ENCODE measurements at regions of chr14 and their contacts with region 1.

Region 1: DNA sequence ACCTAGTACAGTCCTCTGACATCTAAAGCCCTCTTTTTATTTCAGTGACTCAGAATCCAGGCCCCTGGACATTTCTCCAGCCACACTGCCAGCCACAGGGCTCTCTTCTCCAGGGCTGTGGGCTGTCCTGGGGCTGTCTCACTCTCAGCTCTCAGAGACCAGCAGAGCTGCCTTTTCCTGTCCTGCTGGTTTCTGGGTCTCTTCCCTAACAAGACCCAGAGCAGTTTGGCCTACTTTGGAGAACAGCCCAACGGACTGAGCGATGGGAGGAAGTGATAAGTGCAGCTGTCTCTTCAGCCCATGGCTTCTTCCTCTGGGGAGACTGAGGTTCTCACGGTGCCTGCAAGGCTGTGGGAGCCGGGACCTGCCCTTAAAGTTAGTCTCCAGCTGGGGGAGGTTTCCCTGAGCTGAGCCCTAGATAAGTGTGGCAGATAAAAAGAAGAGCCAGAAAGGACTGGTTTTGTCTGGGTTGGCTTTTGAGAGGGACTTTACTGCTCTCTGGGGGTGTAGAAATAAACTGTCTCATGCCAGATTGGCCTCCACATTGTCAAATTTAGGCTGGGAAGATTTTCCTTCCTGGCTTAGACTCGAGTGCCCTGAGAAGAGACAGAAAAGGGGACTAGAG is 979.9 kb downstream of the VRK1 start:
- DNase-seq: peak in 4 of 14 experiments; percentile 17 to 32 (median 28)
- ATAC-seq: peak; percentile 71
- H3K4me3 ChIP-seq: no peak overlapping the region
- H3K4me3 Mint-ChIP-seq: peak overlapping the region; percentile 43
- H3K27ac ChIP-seq: no peak overlapping the region
- H3K27ac Mint-ChIP-seq: peak overlapping the region; percentile 31
- H3K4me1 ChIP-seq: peaks cover 13% of the 10 kb centered on the region
- H3K4me1 Mint-ChIP-seq: peaks cover 37% of the 10 kb centered on the region
- H3K27me3 ChIP-seq: no peaks in the 10 kb centered on the region
- H3K27me3 Mint-ChIP-seq: no peaks in the 10 kb centered on the region
- CTCF ChIP-seq: no peak

Region 2: DNA sequence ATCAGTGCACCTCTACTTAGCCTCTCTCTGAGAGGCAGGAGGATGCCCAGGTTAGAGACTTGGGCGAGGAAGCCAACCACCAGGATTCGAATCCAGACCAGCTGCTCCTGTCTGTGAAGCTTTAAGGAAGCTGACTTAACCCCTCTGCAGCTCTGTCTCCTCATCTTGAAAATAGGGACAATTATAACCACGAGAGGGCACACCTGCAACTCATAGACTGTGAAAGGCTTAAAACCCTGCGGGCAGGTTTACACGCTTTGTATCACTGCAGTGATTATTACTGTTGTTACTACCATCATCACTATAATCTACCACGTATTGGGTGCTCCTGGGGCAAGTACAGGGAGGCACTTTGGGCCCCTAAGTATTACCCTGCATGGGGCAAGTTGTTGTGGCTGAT is 600.0 kb before region 1 on chr14:
- CTCF ChIA-PET with region 1: no interaction called
- POLR2A ChIA-PET with region 1: no interaction called
- intact Hi-C with region 1: loop called (anchors 1 to 5 kb)
- DNase-seq: peak in 13 of 14 experiments; percentile 4 to 71 (median 23)
- ATAC-seq: peak; percentile 71
- H3K4me3 ChIP-seq: no peak overlapping the region
- H3K4me3 Mint-ChIP-seq: no peak overlapping the region
- H3K27ac ChIP-seq: no peak overlapping the region
- H3K27ac Mint-ChIP-seq: peak overlapping the region; percentile 16
- H3K4me1 ChIP-seq: peaks cover 21% of the 10 kb centered on the region
- H3K4me1 Mint-ChIP-seq: peaks cover 35% of the 10 kb centered on the region
- H3K27me3 ChIP-seq: no peaks in the 10 kb centered on the region
- H3K27me3 Mint-ChIP-seq: no peaks in the 10 kb centered on the region
- CTCF ChIP-seq: peak; percentile 41

Region 3: GRCh38 chr14:97185186-97185585 is 591.9 kb before region 1 on chr14:
- CTCF ChIA-PET with region 1: no interaction called
- POLR2A ChIA-PET with region 1: no interaction called
- intact Hi-C with region 1: loop called (anchors 1 to 5 kb)
- DNase-seq: peak in 9 of 14 experiments; percentile 8 to 60 (median 24)
- ATAC-seq: no peak
- H3K4me3 ChIP-seq: no peak overlapping the region
- H3K4me3 Mint-ChIP-seq: no peak overlapping the region
- H3K27ac ChIP-seq: no peak overlapping the region
- H3K27ac Mint-ChIP-seq: no peak overlapping the region
- H3K4me1 ChIP-seq: peaks cover 5% of the 10 kb centered on the region
- H3K4me1 Mint-ChIP-seq: peaks cover 7% of the 10 kb centered on the region
- H3K27me3 ChIP-seq: no peaks in the 10 kb centered on the region
- H3K27me3 Mint-ChIP-seq: no peaks in the 10 kb centered on the region
- CTCF ChIP-seq: peak; percentile 54

Region 4: DNA sequence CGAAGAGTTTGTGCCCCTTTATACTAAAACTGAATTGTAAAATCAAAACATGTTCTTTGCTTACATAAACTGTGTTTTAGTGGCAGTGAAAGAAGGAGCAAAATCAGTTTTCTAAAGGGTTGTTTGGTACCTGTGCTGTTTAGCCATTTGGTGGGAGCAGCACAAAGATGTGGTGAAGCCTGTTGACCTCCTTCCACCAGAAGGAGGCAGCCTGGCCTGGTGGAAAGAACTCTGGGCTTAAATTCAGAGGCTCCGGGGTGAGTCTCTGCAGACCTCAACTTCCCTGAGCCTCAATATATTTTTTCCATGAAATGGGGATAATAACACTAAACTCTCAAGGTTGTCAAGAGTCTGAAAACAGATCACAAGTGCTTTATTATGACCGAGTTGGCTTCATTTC is 477.4 kb before region 1 on chr14:
- CTCF ChIA-PET with region 1: no interaction called
- POLR2A ChIA-PET with region 1: no interaction called
- intact Hi-C with region 1: loop called in 1 of 2 experiments (anchors 5 kb)
- DNase-seq: peak in 10 of 14 experiments; percentile 7 to 67 (median 22)
- ATAC-seq: no peak
- H3K4me3 ChIP-seq: no peak overlapping the region
- H3K4me3 Mint-ChIP-seq: no peak overlapping the region
- H3K27ac ChIP-seq: no peak overlapping the region
- H3K27ac Mint-ChIP-seq: no peak overlapping the region
- H3K4me1 ChIP-seq: peaks cover 2% of the 10 kb centered on the region
- H3K4me1 Mint-ChIP-seq: peaks cover 16% of the 10 kb centered on the region
- H3K27me3 ChIP-seq: no peaks in the 10 kb centered on the region
- H3K27me3 Mint-ChIP-seq: no peaks in the 10 kb centered on the region
- CTCF ChIP-seq: peak; percentile 63

Region 5: GRCh38 chr14:97724265-97724731 is 52.7 kb before region 1 on chr14:
- CTCF ChIA-PET with region 1: no interaction called
- POLR2A ChIA-PET with region 1: interaction called, 3 read pairs
- intact Hi-C with region 1: loop called in 1 of 2 experiments (anchors 5 kb)
- DNase-seq: peak in 13 of 14 experiments; percentile 9 to 76 (median 37)
- ATAC-seq: peak; percentile 80
- H3K4me3 ChIP-seq: peak overlapping the region; percentile 36
- H3K4me3 Mint-ChIP-seq: peak overlapping the region; percentile 85
- H3K27ac ChIP-seq: peak overlapping the region; percentile 75 to 80
- H3K27ac Mint-ChIP-seq: peak overlapping the region; percentile 94
- H3K4me1 ChIP-seq: peaks cover 54% of the 10 kb centered on the region
- H3K4me1 Mint-ChIP-seq: peaks cover 90% of the 10 kb centered on the region
- H3K27me3 ChIP-seq: no peaks in the 10 kb centered on the region
- H3K27me3 Mint-ChIP-seq: no peaks in the 10 kb centered on the region
- CTCF ChIP-seq: peak; percentile 20

Measured in CD4-positive, alpha-beta T cell (primary cell).